Colonic mucosa (tissue), 4 donors: ENCODE measurements at regions of chr6 and their contacts with region 1.

Region 1: GRCh38 chr6:65776313-65776712 is 69.3 kb upstream of the EYS start:
- DNase-seq: no peak
- H3K4me3 ChIP-seq: no peak overlapping the region
- H3K27ac ChIP-seq: no peak overlapping the region
- H3K4me1 ChIP-seq: no peaks in the 10 kb centered on the region
- H3K27me3 ChIP-seq: no peaks in the 10 kb centered on the region
- CTCF ChIP-seq: no peak

Region 2: DNA sequence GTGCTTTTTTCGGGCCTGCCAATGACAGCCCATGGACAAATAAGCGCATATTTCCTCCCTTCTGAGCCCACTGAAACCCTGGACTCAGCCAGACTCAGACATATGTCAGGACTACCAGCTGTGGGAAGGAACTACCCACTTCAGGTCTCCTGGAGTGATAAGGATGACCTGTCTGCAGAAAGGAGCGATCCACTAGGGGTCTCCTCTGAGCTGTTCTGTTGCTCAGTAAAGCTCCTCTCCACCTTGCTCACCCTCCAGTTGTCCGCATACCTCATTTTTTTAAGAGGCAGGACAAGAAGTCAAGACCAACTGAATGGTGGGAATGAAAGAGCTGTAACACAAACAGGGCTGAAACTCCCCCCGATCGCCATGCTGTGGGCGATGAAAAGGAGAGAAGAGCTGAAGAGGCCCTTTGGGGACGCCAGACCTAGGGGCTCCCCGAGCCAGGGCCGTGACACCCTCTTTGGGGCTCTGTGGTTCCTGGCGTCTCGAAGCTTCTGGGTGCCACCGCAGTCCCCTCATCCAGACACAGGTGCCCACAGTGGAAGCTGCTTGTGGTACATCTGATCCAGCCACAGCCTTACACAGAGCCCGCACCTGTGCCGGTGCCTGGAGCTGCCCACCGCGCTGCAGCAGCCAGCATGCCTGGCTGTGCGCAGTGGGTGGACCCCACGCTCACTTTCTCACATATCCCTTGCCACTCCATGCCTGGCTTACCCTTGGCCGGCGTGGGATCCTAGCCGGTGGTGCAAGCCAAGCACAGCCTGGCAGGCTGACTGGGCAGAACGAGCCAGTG is 138.1 kb before region 1 on chr6:
- intact Hi-C with region 1: loop called (anchors 5 kb)
- DNase-seq: peak; percentile 28
- H3K4me3 ChIP-seq: no peak overlapping the region
- H3K27ac ChIP-seq: no peak overlapping the region
- H3K4me1 ChIP-seq: no peaks in the 10 kb centered on the region
- H3K27me3 ChIP-seq: no peaks in the 10 kb centered on the region
- CTCF ChIP-seq: peak; percentile 15

Region 3: DNA sequence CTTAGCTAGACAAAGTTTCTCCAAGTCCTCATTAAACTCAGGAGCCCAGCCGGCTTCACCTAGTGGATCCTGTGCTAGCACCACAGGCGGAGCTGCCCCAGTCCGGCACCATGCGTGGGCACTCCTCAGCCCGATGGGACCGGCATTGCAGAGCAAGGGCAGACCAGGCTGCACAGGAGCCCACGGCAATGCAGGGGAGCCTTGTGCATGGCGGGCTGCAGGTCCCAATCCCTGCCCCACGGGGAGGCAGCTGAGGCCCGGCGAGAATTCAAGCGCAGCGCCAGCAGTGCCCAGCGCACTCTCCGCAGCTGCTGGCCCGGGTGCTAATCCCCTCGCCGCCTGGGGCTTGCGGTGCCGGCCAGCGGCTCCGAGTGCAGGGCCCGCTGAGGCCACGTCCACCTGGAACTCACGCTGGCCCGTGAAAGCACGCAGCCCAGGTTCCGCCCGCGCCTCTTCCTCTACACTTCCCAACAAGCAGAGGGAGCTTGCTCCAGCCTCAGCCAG is 223.0 kb after region 1 on chr6:
- intact Hi-C with region 1: no loop called
- DNase-seq: no peak
- H3K4me3 ChIP-seq: no peak overlapping the region
- H3K27ac ChIP-seq: no peak overlapping the region
- H3K4me1 ChIP-seq: no peaks in the 10 kb centered on the region
- H3K27me3 ChIP-seq: no peaks in the 10 kb centered on the region
- CTCF ChIP-seq: no peak